ENCODE measurements at regions of chr12 and their contacts with region 1.

Region 1: GRCh38 chr12:122871851-122872780 is 23.8 kb downstream of the VPS37B start:
- DNase-seq: peak in 3 of 5 donors; percentile 39 to 53 (median 42)
- H3K4me3 ChIP-seq: peak overlapping the region; percentile 57
- H3K4me3 Mint-ChIP-seq: peak overlapping the region; percentile 77 to 98 (median 87)
- H3K27ac ChIP-seq: peak overlapping the region; percentile 19
- H3K27ac Mint-ChIP-seq: peak overlapping the region; percentile 75 to 98 (median 94)
- H3K4me1 ChIP-seq: peaks cover 71% of the 10 kb centered on the region
- H3K4me1 Mint-ChIP-seq: peaks cover 69 to 84% (median 75%) of the 10 kb centered on the region in 3 donors
- H3K27me3 ChIP-seq: no peaks in the 10 kb centered on the region
- H3K27me3 Mint-ChIP-seq: no peaks in the 10 kb centered on the region

Region 2: DNA sequence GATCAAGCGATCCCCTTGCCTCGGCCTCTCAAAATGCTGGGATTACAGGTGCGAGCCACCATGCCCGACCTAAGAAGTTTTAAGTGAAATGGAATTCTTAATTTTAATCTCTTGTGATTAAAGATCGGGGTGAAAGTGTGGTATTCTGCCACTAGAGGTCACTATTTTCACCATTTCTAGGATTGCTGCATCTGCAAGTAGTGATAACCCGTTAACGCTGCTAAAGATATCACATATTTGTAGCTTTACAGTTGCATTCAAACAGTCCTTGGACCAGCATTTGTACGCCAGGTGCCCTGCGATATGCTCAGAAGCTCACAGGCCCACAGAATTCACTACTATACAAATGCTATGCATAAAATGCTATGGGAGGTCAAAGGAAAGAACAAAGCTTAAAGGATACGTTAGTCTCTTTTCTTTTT is 78.4 kb before region 1 on chr12:
- CTCF ChIA-PET with region 1: interaction called, 11 read pairs
- POLR2A ChIA-PET with region 1: no interaction called
- DNase-seq: peak in 2 of 5 donors; percentile 46 to 66
- H3K4me3 ChIP-seq: no peak overlapping the region
- H3K4me3 Mint-ChIP-seq: no peak overlapping the region
- H3K27ac ChIP-seq: no peak overlapping the region
- H3K27ac Mint-ChIP-seq: peak overlapping the region in 1 of 8 donors; percentile 81
- H3K4me1 ChIP-seq: peaks cover 4% of the 10 kb centered on the region
- H3K4me1 Mint-ChIP-seq: peaks cover 3 to 5% (median 4%) of the 10 kb centered on the region in 3 donors
- H3K27me3 ChIP-seq: no peaks in the 10 kb centered on the region
- H3K27me3 Mint-ChIP-seq: peaks cover 0 to 1% of the 10 kb centered on the region in 2 donors

Region 3: GRCh38 chr12:122895705-122896636 is 23.9 kb after region 1 on chr12 and contains the start of gene VPS37B:
- CTCF ChIA-PET with region 1: interaction called, 43 read pairs
- POLR2A ChIA-PET with region 1: interaction called, 11 read pairs
- DNase-seq: peak; percentile 85 to 94 (median 93)
- H3K4me3 ChIP-seq: peak within 1 kb of the TSS; percentile 94
- H3K4me3 Mint-ChIP-seq: peak within 1 kb of the TSS; percentile 85 to 99 (median 94)
- H3K27ac ChIP-seq: peak within 1 kb of the TSS; percentile 91
- H3K27ac Mint-ChIP-seq: peak within 1 kb of the TSS; percentile 94 to 100 (median 99)
- H3K4me1 ChIP-seq: peaks cover 91% of the 10 kb centered on the region
- H3K4me1 Mint-ChIP-seq: peaks cover 80 to 95% (median 95%) of the 10 kb centered on the region in 3 donors
- H3K27me3 ChIP-seq: no peaks in the 10 kb centered on the region
- H3K27me3 Mint-ChIP-seq: peaks cover 0 to 5% of the 10 kb centered on the region in 2 donors
- total RNA-seq, gene VPS37B: 19.3 to 19.9 TPM

Region 4: GRCh38 chr12:123019841-123020138 is 147.7 kb after region 1 on chr12:
- CTCF ChIA-PET with region 1: no interaction called
- POLR2A ChIA-PET with region 1: no interaction called
- DNase-seq: peak in 1 of 5 donors; percentile 3
- H3K4me3 ChIP-seq: no peak overlapping the region
- H3K4me3 Mint-ChIP-seq: no peak overlapping the region
- H3K27ac ChIP-seq: no peak overlapping the region
- H3K27ac Mint-ChIP-seq: peak overlapping the region in 4 of 8 donors; percentile 32 to 57 (median 42)
- H3K4me1 ChIP-seq: peaks cover 4% of the 10 kb centered on the region
- H3K4me1 Mint-ChIP-seq: peaks cover 3 to 10% (median 5%) of the 10 kb centered on the region in 3 donors
- H3K27me3 ChIP-seq: no peaks in the 10 kb centered on the region
- H3K27me3 Mint-ChIP-seq: no peaks in the 10 kb centered on the region

Region 5: DNA sequence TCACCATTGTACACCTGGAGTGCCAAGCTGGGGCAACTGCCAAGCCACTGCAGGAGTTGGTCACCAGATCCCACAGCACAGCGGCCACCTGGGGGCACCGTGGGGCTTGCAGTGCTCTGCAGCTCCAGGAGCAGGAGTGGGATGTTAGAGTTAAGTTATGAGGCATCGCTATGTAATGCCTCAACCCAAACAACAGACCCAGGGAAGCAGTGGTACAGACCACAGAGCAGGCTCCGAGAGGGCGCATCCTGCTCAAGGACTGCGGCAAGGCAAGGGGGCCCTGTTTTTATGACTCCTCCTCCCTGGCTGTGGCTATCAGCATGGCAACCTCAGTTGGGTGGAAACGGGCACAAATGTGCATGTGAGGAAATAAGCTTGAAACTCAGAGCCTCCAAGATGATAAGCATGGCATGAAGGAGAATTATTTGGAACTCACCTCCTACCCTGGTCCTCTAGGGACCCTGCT is 171.5 kb after region 1 on chr12:
- CTCF ChIA-PET with region 1: no interaction called
- POLR2A ChIA-PET with region 1: interaction called, 10 read pairs
- DNase-seq: peak; percentile 31 to 78 (median 64)
- H3K4me3 ChIP-seq: no peak overlapping the region
- H3K4me3 Mint-ChIP-seq: peak overlapping the region in 4 of 7 donors; percentile 15 to 46 (median 28)
- H3K27ac ChIP-seq: no peak overlapping the region
- H3K27ac Mint-ChIP-seq: peak overlapping the region; percentile 66 to 88 (median 77)
- H3K4me1 ChIP-seq: peaks cover 16% of the 10 kb centered on the region
- H3K4me1 Mint-ChIP-seq: peaks cover 21 to 25% (median 24%) of the 10 kb centered on the region in 3 donors
- H3K27me3 ChIP-seq: no peaks in the 10 kb centered on the region
- H3K27me3 Mint-ChIP-seq: peaks cover 0 to 3% of the 10 kb centered on the region in 2 donors

Measured in CD8-positive, alpha-beta memory T cell (primary cell).